ENCODE measurements at regions of chr11 and their contacts with region 1.

Region 1: DNA sequence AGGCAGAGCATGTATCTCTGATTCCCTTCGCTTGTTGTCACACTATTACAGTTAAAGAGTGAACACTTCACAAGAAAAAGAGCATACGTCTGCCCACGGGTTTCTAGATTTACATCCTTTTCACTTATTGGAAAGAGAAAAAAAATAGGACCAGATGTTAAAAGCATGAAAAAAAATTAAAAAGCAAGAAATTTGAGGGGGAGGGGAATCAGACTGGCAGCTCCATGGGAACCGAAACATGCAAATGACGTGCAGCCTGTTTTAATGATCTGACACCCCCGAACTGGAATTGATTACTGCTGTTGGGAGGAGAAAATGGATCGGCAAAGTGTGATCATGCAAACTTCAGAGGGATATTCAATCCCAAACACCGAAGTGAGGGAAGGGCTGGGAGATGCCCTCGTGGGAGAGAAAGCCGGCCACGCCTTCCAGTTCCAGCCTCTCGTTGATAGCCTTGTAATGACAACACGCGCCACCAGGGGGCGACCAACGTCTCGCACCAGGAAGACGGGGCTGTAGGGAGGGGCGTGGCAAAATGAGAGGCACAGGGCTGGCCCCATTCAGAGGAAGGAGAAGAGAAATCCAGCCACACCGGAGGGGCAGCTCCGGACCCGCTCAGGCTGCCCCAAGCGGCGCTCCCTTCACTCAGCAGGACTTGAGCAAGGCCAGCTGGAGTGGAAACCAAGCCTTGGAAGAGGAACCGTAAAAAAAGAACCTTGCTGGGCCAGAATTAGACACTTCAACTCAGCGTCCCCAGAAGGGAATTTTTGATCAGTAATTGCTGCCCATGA is 53.8 kb upstream of the SYT13 start:
- DNase-seq: peak; percentile 87 to 93 (median 89)
- H3K4me3 ChIP-seq: peak overlapping the region in 1 of 3 experiments; percentile 46
- H3K4me3 Mint-ChIP-seq: peak overlapping the region; percentile 68 to 89
- H3K27ac ChIP-seq: no peak overlapping the region
- H3K27ac Mint-ChIP-seq: peak overlapping the region in 5 of 7 donors; percentile 44 to 82 (median 54)
- H3K4me1 ChIP-seq: peaks cover 4 to 11% of the 10 kb centered on the region in 2 donors
- H3K4me1 Mint-ChIP-seq: peaks cover 8% of the 10 kb centered on the region
- H3K27me3 ChIP-seq: peaks cover 2 to 6% of the 10 kb centered on the region in 2 donors
- H3K27me3 Mint-ChIP-seq: peaks cover 7 to 15% (median 15%) of the 10 kb centered on the region in 3 donors
- CTCF ChIP-seq: peak; percentile 95

Region 2: GRCh38 chr11:44936525-44936924 is 403.4 kb before region 1 on chr11:
- intact Hi-C with region 1: loop called (anchors 10 kb)
- DNase-seq: peak; percentile 71 to 77 (median 73)
- H3K4me3 ChIP-seq: no peak overlapping the region
- H3K4me3 Mint-ChIP-seq: no peak overlapping the region
- H3K27ac ChIP-seq: no peak overlapping the region
- H3K27ac Mint-ChIP-seq: no peak overlapping the region
- H3K4me1 ChIP-seq: peaks cover 12 to 14% of the 10 kb centered on the region in 2 donors
- H3K4me1 Mint-ChIP-seq: peaks cover 16% of the 10 kb centered on the region
- H3K27me3 ChIP-seq: no peaks in the 10 kb centered on the region
- H3K27me3 Mint-ChIP-seq: peaks cover 1 to 3% (median 2%) of the 10 kb centered on the region in 3 donors
- CTCF ChIP-seq: peak; percentile 94

Region 3: DNA sequence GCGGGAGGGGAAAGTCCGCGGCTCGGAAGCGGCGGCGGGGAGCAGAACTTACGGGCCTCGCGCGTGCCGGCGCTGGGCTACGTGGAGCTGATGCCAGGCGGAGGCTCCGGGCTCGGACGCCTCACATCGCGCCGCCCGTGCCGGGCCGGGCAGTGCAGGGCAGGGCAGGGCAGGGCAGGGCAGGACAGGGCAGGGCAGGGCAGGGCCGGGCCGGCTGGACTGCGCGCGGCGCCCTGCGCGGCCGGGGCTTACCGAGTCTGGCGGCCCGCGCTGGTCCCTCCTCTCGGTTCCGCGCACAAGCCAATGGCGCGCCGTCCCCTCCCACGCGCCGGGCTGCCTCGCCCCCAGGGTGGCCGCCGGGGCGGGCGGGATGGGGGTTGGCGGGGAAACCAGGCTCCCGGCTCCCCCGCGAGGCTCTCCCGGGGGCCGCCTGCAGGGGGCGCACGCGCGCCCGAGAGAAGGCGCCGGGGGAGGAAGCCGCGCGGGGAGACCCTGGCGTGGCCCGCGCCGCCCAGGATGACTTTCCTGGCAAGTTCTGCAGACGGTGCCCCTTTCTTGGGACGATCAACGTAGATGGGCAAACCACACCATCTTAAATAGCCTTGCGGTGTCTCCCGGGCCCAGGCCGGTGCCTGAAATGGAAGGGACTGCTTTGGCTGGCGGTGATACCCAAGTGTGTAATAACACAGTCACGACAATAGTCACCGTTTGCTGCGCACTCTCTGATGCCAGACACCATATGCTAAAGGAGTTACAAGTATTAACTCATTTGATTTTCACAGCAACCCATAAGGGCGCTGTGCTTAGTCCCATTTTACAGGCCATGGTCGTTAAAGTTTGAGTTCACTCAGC is 389.1 kb before region 1 on chr11 and contains the start of gene TP53I11:
- intact Hi-C with region 1: loop called in 1 of 2 experiments (anchors 10 kb)
- DNase-seq: peak; percentile 44 to 56 (median 48)
- H3K4me3 ChIP-seq: peak within 1 kb of the TSS; percentile 75 to 92 (median 84)
- H3K4me3 Mint-ChIP-seq: peak within 1 kb of the TSS; percentile 84 to 89
- H3K27ac ChIP-seq: peak within 1 kb of the TSS in 1 of 2 donors; percentile 79
- H3K27ac Mint-ChIP-seq: peak within 1 kb of the TSS in 6 of 7 donors; percentile 26 to 72 (median 68)
- H3K4me1 ChIP-seq: peaks cover 39 to 57% of the 10 kb centered on the region in 2 donors
- H3K4me1 Mint-ChIP-seq: peaks cover 52% of the 10 kb centered on the region
- H3K27me3 ChIP-seq: peaks cover 0 to 3% of the 10 kb centered on the region in 2 donors
- H3K27me3 Mint-ChIP-seq: peaks cover 3 to 15% (median 5%) of the 10 kb centered on the region in 3 donors
- CTCF ChIP-seq: peak; percentile 82
- polyA plus RNA-seq, gene TP53I11: 11.0 to 13.2 (median 11.3) TPM

Region 4: DNA sequence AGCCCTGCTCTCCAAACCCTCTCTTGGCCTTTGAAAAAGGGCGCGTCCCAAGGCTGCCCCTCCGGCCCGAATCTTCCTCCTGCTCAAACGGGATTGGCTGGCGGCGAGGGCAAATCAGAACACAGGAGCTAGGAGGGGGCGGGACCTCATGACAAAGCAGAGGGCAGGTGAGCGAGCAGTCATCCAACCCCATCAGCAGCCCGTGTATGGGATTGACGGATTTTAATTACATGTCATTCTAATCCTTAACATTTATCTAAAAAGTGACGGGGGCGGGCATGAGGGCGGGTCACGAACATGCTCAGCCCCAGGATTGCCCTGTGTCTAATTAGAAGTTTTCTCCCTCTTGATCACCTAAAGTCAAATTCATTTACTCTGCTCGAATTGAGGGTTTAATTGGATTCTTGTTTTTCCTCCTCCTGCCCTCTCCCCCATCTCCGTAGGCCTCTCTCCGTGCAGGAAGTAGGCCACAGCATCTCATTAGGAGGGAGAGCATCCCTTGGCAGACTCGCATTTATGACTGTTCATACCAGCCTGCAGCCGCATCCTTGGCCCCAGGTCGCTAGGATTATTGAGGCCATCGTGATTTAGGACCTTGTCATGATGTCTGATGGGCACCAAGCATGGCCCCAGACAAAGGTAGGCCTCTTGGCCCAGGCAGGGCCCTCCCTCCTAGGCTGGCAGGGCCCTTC is 178.4 kb after region 1 on chr11:
- intact Hi-C with region 1: no loop called
- DNase-seq: no peak
- H3K4me3 ChIP-seq: no peak overlapping the region
- H3K4me3 Mint-ChIP-seq: no peak overlapping the region
- H3K27ac ChIP-seq: peak overlapping the region; percentile 19 to 54
- H3K27ac Mint-ChIP-seq: peak overlapping the region in 5 of 7 donors; percentile 11 to 81 (median 77)
- H3K4me1 ChIP-seq: peaks cover 24 to 32% of the 10 kb centered on the region in 2 donors
- H3K4me1 Mint-ChIP-seq: peaks cover 43% of the 10 kb centered on the region
- H3K27me3 ChIP-seq: no peaks in the 10 kb centered on the region
- H3K27me3 Mint-ChIP-seq: peaks cover 0 to 4% (median 2%) of the 10 kb centered on the region in 3 donors
- CTCF ChIP-seq: no peak